Dorsolateral prefrontal cortex (tissue), 120 donors: ENCODE measurements at regions of chrX and their contacts with region 1.

Region 1: DNA sequence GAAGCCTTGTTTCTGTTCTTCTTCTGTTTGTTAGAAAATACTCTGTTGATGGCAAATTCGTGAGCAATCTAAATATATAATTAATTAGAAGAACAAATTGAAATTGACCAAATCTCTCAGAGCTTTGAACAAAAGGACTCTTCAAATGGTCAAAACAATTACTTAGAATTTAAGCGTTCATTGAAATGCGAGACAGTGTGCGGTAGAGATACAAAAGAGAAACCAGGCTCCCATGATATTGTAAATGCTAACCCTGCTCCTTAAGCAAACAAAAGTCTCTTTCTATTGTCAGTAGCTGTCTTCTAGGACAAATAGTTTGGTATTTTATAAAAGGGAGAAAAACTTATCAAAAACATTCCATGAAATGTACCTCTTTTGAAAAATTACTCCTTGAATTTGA is 453.4 kb upstream of the MAGEB2 start:
- DNase-seq: no peak
- H3K4me3 ChIP-seq: peak overlapping the region in 30 of 59 donors; percentile 1 to 46 (median 22)
- H3K27ac ChIP-seq: peak overlapping the region in 57 of 59 donors; percentile 23 to 90 (median 76)
- H3K27me3 ChIP-seq: peaks cover 0 to 36% (median 5%) of the 10 kb centered on the region in 45 donors
- CTCF ChIP-seq: no peak

Region 2: DNA sequence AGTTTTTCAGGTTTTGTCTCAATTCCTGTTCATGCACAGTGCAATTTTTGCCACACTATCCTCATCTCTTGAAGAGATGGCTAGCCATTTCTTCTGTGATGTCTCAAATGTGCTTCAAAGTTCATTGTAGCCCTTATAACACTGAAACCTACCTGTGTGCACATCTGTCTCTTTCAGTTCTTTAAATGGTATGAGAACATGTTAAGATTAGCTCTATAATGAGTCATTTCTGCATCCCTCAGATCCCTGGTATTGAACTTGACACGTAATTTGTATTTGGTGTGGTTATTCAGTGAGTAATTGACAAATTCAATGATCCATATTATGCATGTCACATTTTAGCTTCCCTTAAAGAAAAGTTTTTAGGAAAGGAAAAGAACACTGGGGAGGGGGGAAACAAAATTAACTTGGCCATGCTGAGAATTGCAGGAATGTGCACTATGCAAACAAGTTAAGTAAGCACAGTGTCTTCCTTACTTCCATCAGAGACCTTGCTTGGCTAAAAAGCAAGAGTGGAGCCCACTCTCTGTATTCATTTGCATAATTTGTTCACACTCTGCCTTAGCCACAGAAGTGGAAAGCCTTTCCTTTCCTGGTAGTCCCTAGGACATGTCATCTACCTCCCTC is 206.4 kb before region 1 on chrX:
- intact Hi-C with region 1: no loop called
- DNase-seq: no peak
- H3K4me3 ChIP-seq: no peak overlapping the region
- H3K27ac ChIP-seq: no peak overlapping the region
- H3K27me3 ChIP-seq: peaks cover 0 to 22% (median 0%) of the 10 kb centered on the region in 45 donors
- CTCF ChIP-seq: no peak

Region 3: DNA sequence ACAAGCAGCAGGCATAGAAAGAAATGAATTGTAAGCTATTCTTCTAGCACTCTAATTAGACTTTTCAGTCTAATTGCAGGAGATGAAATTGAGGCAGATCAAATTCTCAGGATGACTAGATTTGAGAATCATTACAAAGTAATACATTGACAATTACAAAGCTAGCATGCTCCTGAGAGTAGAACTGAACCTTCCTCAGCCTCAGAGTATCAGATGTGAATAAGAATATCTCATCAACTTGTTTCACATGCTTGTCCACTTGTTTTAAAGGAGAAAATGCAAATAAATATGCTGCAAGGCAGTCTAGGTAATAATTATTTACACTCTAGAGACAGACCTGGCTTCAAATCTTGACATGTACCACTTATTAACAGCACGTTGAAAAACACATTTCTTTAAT is 37.7 kb before region 1 on chrX:
- intact Hi-C with region 1: loop called in 1 of 2 experiments (anchors 5 kb)
- DNase-seq: no peak
- H3K4me3 ChIP-seq: no peak overlapping the region
- H3K27ac ChIP-seq: peak overlapping the region in 16 of 59 donors; percentile 13 to 92 (median 82)
- H3K27me3 ChIP-seq: peaks cover 0 to 55% (median 0%) of the 10 kb centered on the region in 45 donors
- CTCF ChIP-seq: no peak